GM12878 (cell line): ENCODE measurements at regions of chr1 and their contacts with region 1.

Region 1: GRCh38 chr1:92831762-92832536 is at the start of gene RPL5:
- DNase-seq: peak; percentile 96
- ATAC-seq: peak; percentile 89
- H3K4me3 ChIP-seq: peak within 1 kb of the TSS; percentile 97
- H3K27ac ChIP-seq: peak within 1 kb of the TSS; percentile 95
- H3K4me1 ChIP-seq: no peaks in the 10 kb centered on the region
- H3K27me3 ChIP-seq: no peaks in the 10 kb centered on the region
- CTCF ChIP-seq: peak; percentile 95 to 99 (median 99); a peak in 5 of 6 replicates
- EP300 ChIP-seq: 0 out of 4 replicates have a peak, but pooled peaks of 1 of the 2 experiments have one; percentile 29
- POLR2A ChIP-seq: peak; percentile 100
- RAD21 ChIP-seq: peak; percentile 27; the same call in 1 of the 2 replicates
- polyA plus RNA-seq, gene RPL5: 5,267 to 6,047 TPM

Region 2: GRCh38 chr1:92298573-92299476 is 533.1 kb before region 1 on chr1 and contains the starts of genes GLMN and RPAP2:
- CTCF ChIA-PET with region 1: no interaction called
- POLR2A ChIA-PET with region 1: no interaction called
- RAD21 ChIA-PET with region 1: no interaction called
- SMC1A ChIA-PET with region 1: no interaction called
- in situ Hi-C with region 1: no loop called
- intact Hi-C with region 1: loop called (anchors 5 kb)
- DNase-seq: peak; percentile 45
- ATAC-seq: peak; percentile 97
- H3K4me3 ChIP-seq: peak within 1 kb of the TSS; percentile 99
- H3K27ac ChIP-seq: peak within 1 kb of the TSS; percentile 93
- H3K4me1 ChIP-seq: no peaks in the 10 kb centered on the region
- H3K27me3 ChIP-seq: no peaks in the 10 kb centered on the region
- CTCF ChIP-seq: 0 out of 6 replicates have a peak, but pooled peaks of 1 of the 3 experiments have one; percentile 13
- EP300 ChIP-seq: no peak
- POLR2A ChIP-seq: peak; percentile 99
- RAD21 ChIP-seq: no peak
- polyA plus RNA-seq, gene GLMN: 18.2 to 20.6 TPM
- polyA plus RNA-seq, gene RPAP2: 20.2 to 24.0 TPM

Region 3: GRCh38 chr1:92701147-92701546 is 130.8 kb before region 1 on chr1:
- CTCF ChIA-PET with region 1: no interaction called
- POLR2A ChIA-PET with region 1: no interaction called
- RAD21 ChIA-PET with region 1: no interaction called
- SMC1A ChIA-PET with region 1: no interaction called
- in situ Hi-C with region 1: no loop called
- intact Hi-C with region 1: no loop called
- DNase-seq: no peak
- ATAC-seq: no peak
- H3K4me3 ChIP-seq: no peak overlapping the region
- H3K27ac ChIP-seq: no peak overlapping the region
- H3K4me1 ChIP-seq: no peaks in the 10 kb centered on the region
- H3K27me3 ChIP-seq: no peaks in the 10 kb centered on the region
- CTCF ChIP-seq: no peak
- EP300 ChIP-seq: no peak
- POLR2A ChIP-seq: no peak
- RAD21 ChIP-seq: no peak

Region 4: DNA sequence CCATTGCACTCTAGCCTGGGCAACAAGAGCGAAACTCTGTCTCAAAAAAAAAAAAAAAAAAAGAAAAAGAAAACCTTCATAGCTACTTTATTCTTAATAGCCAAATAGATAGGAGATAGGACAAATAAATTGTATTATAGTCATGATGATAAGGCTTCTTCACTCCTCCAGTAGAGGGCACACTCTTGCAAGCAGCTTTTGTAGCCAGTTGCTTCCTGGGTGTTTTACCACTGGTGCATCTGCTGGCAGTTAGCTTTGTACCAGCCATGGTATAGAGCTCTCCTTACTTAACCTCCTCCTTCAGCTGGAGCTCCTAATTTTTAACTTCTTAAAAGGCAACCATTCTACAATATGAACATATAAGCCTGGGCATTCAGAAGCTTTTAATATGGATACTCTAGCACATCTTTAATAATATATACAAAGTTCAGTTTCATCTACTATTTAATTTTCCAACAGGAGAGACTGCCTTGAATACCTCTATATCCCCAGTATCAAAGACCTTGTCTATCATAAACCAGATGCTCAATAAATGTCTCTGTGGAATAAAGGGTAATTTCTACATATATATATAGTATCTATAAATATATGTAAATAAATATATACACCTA is 82.8 kb before region 1 on chr1:
- CTCF ChIA-PET with region 1: interaction called, 12 read pairs
- POLR2A ChIA-PET with region 1: no interaction called
- RAD21 ChIA-PET with region 1: interaction called, 5 read pairs
- SMC1A ChIA-PET with region 1: interaction called, 3 read pairs
- in situ Hi-C with region 1: no loop called
- intact Hi-C with region 1: no loop called
- DNase-seq: no peak
- ATAC-seq: peak; percentile 97
- H3K4me3 ChIP-seq: no peak overlapping the region
- H3K27ac ChIP-seq: no peak overlapping the region
- H3K4me1 ChIP-seq: no peaks in the 10 kb centered on the region
- H3K27me3 ChIP-seq: no peaks in the 10 kb centered on the region
- CTCF ChIP-seq: peak; percentile 75 to 77 (median 77)
- EP300 ChIP-seq: no peak
- POLR2A ChIP-seq: no peak
- RAD21 ChIP-seq: peak; percentile 76

Region 5: DNA sequence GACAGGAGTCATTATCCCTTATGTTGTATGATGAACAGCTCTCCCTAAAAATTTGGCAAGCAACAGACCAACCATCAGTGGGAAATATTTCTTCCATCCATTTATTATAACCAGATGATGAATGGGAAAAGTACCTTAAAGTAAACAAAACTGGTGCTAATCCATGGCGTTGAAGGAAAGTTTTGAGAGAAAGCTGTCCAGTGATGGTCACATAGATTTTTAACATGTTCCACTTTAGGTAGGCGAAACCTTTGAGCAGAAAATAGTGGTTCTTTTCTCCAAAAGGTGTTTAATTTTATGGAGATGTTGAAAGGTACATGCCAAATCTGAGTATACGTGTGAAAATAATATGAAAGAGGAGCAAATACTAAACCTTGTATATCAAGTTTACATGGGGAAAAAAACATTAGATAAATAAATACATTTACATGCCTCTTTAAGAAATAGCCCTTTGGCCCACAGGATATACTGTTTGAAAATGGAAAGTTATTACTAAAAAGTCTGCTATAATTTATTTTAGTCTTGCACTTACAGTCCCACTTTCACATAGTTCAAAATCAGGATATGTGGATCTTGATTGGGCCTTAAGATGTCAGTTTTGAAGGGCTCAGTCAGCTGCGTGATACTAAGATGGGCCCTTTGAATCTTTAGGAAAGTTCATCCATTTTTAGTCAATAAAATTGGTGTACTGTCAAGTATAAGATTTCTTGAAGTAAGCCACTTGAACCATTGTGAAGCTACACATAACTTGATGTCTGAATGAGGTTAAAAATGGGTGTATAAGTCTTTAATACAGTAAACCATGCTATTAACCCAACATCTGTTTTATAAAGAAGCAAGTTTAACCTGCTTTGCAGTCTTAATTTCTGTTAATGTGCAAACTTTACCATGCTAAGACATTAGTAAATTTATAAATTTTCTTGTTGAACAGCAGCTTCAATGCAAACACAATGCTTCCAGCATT is 10.4 kb after region 1 on chr1:
- CTCF ChIA-PET with region 1: interaction called, 10 read pairs
- POLR2A ChIA-PET with region 1: interaction called, 4 read pairs
- RAD21 ChIA-PET with region 1: interaction called, 5 read pairs
- SMC1A ChIA-PET with region 1: no interaction called
- in situ Hi-C with region 1: no loop called
- intact Hi-C with region 1: no loop called
- DNase-seq: no peak
- ATAC-seq: no peak
- H3K4me3 ChIP-seq: no peak overlapping the region
- H3K27ac ChIP-seq: no peak overlapping the region
- H3K4me1 ChIP-seq: no peaks in the 10 kb centered on the region
- H3K27me3 ChIP-seq: no peaks in the 10 kb centered on the region
- CTCF ChIP-seq: no peak
- EP300 ChIP-seq: no peak
- POLR2A ChIP-seq: no peak
- RAD21 ChIP-seq: no peak

Region 6: GRCh38 chr1:92851729-92852128 is 19.8 kb after region 1 on chr1:
- CTCF ChIA-PET with region 1: interaction called, 6 read pairs
- POLR2A ChIA-PET with region 1: no interaction called
- RAD21 ChIA-PET with region 1: no interaction called
- SMC1A ChIA-PET with region 1: interaction called, 3 read pairs
- in situ Hi-C with region 1: no loop called
- intact Hi-C with region 1: loop called (anchors 2 kb)
- DNase-seq: no peak
- ATAC-seq: no peak
- H3K4me3 ChIP-seq: no peak overlapping the region
- H3K27ac ChIP-seq: no peak overlapping the region
- H3K4me1 ChIP-seq: peaks cover 6% of the 10 kb centered on the region
- H3K27me3 ChIP-seq: no peaks in the 10 kb centered on the region
- CTCF ChIP-seq: no peak
- EP300 ChIP-seq: no peak
- POLR2A ChIP-seq: no peak
- RAD21 ChIP-seq: no peak

Region 7: GRCh38 chr1:93179886-93180722 is 348.2 kb after region 1 on chr1 and contains the start of gene TMED5:
- CTCF ChIA-PET with region 1: no interaction called
- POLR2A ChIA-PET with region 1: no interaction called
- RAD21 ChIA-PET with region 1: no interaction called
- SMC1A ChIA-PET with region 1: no interaction called
- in situ Hi-C with region 1: no loop called
- intact Hi-C with region 1: loop called (anchors 10 kb)
- DNase-seq: peak; percentile 90
- ATAC-seq: peak; percentile 88
- H3K4me3 ChIP-seq: peak within 1 kb of the TSS; percentile 95
- H3K27ac ChIP-seq: peak within 1 kb of the TSS; percentile 99
- H3K4me1 ChIP-seq: no peaks in the 10 kb centered on the region; the same call in 1 of the 2 replicates
- H3K27me3 ChIP-seq: no peaks in the 10 kb centered on the region
- CTCF ChIP-seq: peak in 2 of 3 experiments; percentile 1 to 9; a peak in 2 of 6 replicates
- EP300 ChIP-seq: no peak; a peak in 1 of 4 replicates
- POLR2A ChIP-seq: peak; percentile 70
- RAD21 ChIP-seq: no peak
- polyA plus RNA-seq, gene TMED5: 18.5 to 19.9 TPM

Region 8: DNA sequence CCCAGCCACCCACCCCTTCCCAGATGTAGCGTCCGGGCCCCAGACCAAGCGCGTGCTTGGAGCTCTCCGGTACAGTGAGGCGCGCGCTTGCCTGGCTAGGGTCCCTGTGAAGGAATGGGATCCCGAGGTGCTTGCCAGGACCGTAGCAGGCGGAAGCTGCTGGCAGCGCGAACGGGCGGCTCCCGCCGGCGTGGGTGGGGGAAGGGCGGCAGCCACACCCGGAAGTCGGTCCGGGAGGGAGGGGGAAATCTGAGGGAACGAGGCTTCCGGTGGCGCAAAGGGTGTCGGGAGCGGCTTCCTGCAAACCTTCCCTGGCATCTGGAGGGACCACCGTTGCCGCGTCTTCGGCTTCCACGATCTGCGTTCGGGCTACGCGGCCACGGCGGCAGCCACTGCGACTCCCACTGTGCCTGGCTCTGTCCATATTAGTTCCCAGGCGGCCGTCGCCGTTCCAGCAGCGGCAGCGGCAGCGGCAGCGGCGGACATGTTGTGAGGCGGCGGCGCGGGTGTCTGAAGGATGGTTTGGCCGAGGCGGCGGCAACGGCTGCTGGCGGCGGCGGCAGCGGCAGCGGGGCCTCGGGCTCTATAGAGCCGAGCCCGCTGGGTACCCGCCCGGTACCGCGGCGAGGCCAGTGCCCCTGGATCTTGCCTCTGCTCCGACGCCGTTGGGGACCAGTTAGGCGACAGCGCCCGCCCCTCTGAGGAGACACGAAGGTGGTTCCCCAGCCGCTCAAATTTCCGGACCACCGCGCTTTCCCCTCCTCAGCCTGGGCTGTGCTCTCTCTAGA is 513.9 kb after region 1 on chr1 and contains the start of gene DR1:
- CTCF ChIA-PET with region 1: interaction called, 3 read pairs
- POLR2A ChIA-PET with region 1: no interaction called
- RAD21 ChIA-PET with region 1: no interaction called
- SMC1A ChIA-PET with region 1: no interaction called
- in situ Hi-C with region 1: no loop called
- intact Hi-C with region 1: loop called (anchors 10 kb)
- DNase-seq: peak; percentile 67
- ATAC-seq: peak; percentile 74
- H3K4me3 ChIP-seq: peak within 1 kb of the TSS; percentile 95
- H3K27ac ChIP-seq: peak within 1 kb of the TSS; percentile 99
- H3K4me1 ChIP-seq: peaks cover 4% of the 10 kb centered on the region; the same call in 1 of the 2 replicates
- H3K27me3 ChIP-seq: no peaks in the 10 kb centered on the region
- CTCF ChIP-seq: no peak
- EP300 ChIP-seq: 0 out of 4 replicates have a peak, but pooled peaks of 1 of the 2 experiments have one; percentile 19
- POLR2A ChIP-seq: peak; percentile 97
- RAD21 ChIP-seq: no peak
- polyA plus RNA-seq, gene DR1: 7.4 to 12.7 TPM